ENCODE measurements at regions of chr12 and their contacts with region 1.

Region 1: GRCh38 chr12:45215419-45216229 is at the start of gene ANO6:
- DNase-seq: peak; percentile 91 to 94 (median 92)
- ATAC-seq: peak; percentile 90 to 97 (median 96)
- H3K4me3 ChIP-seq: peak within 1 kb of the TSS; percentile 61 to 97 (median 90)
- H3K27ac ChIP-seq: peak within 1 kb of the TSS; percentile 83 to 99 (median 94)
- H3K4me1 ChIP-seq: peaks cover 4 to 39% (median 28%) of the 10 kb centered on the region in 12 donors
- H3K27me3 ChIP-seq: no peaks in the 10 kb centered on the region
- CTCF ChIP-seq: peak in 4 of 12 donors; percentile 19 to 35 (median 29)
- POLR2A ChIP-seq: peak in 1 of 2 donors; percentile 76
- total RNA-seq, gene ANO6: 29.1 to 57.2 (median 46.7) TPM

Region 2: DNA sequence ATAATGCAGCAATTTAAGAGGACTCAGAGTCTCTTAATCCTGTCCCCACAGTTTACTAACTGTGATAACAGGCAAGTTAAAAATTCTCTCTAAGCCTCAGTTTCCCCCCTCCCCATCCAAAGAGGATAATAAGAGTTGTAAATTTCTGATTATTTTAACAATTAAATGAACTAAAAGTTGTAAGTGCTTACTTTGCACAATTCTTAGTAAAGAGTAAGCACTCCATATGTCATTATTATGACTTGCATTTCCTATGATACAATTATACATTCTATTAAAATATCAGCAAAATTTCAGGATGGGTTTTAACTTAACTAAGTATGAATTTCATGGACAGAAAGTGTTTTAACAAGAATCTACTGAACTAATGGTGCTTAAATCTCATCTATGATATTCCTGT is 419.7 kb before region 1 on chr12:
- intact Hi-C with region 1: no loop called
- DNase-seq: no peak
- ATAC-seq: no peak
- H3K4me3 ChIP-seq: no peak overlapping the region
- H3K27ac ChIP-seq: no peak overlapping the region
- H3K4me1 ChIP-seq: no peaks in the 10 kb centered on the region
- H3K27me3 ChIP-seq: no peaks in the 10 kb centered on the region
- CTCF ChIP-seq: no peak
- POLR2A ChIP-seq: no peak

Region 3: DNA sequence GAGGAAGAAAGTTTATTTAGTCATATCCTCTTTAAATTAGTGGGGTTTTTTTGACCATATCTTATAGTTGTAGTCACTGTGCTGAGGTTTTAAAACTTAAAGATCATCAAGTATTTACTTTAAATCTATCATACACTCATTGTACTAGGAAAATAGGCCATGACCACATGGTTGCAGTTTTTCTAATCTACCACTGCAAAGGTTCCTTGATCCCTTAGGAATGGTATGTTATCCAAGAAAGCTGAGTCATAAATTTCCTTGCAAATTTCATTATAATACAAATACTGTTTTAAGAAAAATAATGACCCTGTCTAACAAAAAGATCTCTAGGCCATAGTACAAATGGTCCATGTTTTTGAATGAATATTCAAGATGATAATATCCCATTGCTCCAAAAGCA is 239.4 kb before region 1 on chr12:
- intact Hi-C with region 1: no loop called
- DNase-seq: no peak
- ATAC-seq: no peak
- H3K4me3 ChIP-seq: no peak overlapping the region
- H3K27ac ChIP-seq: no peak overlapping the region
- H3K4me1 ChIP-seq: no peaks in the 10 kb centered on the region
- H3K27me3 ChIP-seq: no peaks in the 10 kb centered on the region
- CTCF ChIP-seq: no peak
- POLR2A ChIP-seq: no peak

Region 4: DNA sequence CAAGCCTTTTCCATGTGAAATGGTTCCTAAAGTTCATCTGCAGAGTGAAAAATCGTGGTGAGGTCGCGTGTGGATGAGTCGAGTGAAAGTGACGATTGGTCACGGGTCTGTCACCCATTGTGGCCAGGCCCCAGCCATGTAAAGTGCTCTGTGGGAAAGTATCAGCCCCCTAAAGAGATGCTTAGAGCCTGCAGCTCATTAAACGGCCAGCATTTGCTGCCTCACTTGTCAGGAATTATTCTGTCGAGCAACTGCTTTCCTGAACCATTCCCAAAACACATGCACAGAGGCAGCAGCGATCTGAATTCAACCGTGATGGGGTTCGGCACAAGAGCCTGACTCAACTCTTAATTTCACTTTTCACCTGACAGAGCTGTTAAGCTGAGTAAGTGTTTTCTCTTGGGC is 180.8 kb before region 1 on chr12:
- intact Hi-C with region 1: no loop called
- DNase-seq: no peak
- ATAC-seq: no peak
- H3K4me3 ChIP-seq: no peak overlapping the region
- H3K27ac ChIP-seq: no peak overlapping the region
- H3K4me1 ChIP-seq: no peaks in the 10 kb centered on the region
- H3K27me3 ChIP-seq: no peaks in the 10 kb centered on the region
- CTCF ChIP-seq: no peak
- POLR2A ChIP-seq: no peak

Region 5: DNA sequence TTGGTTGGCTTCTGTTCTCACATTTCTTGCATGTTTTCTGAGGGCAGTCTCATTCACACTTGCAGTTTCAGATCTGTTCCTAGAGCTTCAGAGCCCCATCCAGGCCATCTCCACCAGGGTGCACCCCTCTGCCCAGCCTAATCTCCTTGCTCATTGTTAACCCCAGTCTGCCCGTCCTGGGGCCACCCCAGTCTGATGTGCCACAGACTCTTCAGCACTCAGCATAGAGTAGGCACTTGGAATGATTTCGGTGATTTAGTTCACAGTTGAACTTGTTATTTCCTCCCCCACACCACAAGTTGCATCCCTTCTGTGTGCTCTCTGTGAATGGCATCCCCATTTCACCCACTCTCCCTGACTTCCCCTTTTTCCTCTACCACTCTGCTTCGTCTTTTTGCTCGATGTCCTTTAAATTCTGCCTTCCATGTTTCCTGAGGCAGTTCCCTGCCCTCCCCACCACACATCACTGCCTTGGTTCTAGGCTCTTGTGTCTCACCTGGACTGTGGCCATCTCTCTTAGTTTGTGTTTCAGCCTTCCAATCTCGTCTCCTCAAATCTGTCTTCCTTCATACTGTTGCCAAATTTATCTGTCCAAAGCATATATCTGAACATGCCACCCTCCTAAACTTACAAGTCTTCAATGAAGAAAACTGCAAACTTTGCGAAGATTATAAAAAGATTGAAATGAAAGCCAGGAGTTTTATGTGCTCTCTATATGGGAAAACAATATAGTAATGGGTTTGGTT is 41.7 kb after region 1 on chr12:
- intact Hi-C with region 1: loop called in 2 of 10 experiments (anchors 5 to 10 kb)
- DNase-seq: no peak
- ATAC-seq: peak in 2 of 4 donors; percentile 30 to 52
- H3K4me3 ChIP-seq: no peak overlapping the region
- H3K27ac ChIP-seq: no peak overlapping the region
- H3K4me1 ChIP-seq: peaks cover 3 to 56% (median 27%) of the 10 kb centered on the region in 12 donors
- H3K27me3 ChIP-seq: no peaks in the 10 kb centered on the region
- CTCF ChIP-seq: no peak
- POLR2A ChIP-seq: no peak

Region 6: DNA sequence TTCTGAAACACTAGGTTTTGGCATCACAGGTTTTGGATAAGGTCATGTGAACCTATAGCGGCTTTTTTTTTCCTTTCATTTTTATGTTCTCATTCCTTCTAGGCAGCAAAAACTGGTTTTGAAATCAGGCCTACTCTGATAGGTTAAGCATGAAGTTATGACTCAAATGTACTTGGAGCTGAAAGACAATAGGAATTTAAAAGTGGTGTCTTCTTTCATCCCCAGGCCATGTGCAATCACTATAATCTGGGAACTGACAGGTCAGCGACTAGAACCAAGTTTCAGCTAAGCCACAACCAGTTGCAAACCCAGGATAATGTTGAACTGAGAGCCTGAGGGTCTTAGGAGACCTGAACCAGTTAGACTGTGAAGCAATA is 74.6 kb after region 1 on chr12:
- intact Hi-C with region 1: no loop called
- DNase-seq: no peak
- ATAC-seq: no peak
- H3K4me3 ChIP-seq: no peak overlapping the region
- H3K27ac ChIP-seq: no peak overlapping the region
- H3K4me1 ChIP-seq: peaks cover 0 to 27% (median 4%) of the 10 kb centered on the region in 12 donors
- H3K27me3 ChIP-seq: no peaks in the 10 kb centered on the region
- CTCF ChIP-seq: no peak
- POLR2A ChIP-seq: no peak

Region 7: GRCh38 chr12:45354399-45354798 is 138.8 kb after region 1 on chr12:
- intact Hi-C with region 1: loop called in 2 of 10 experiments (anchors 10 kb)
- DNase-seq: no peak
- ATAC-seq: no peak
- H3K4me3 ChIP-seq: no peak overlapping the region
- H3K27ac ChIP-seq: no peak overlapping the region
- H3K4me1 ChIP-seq: peaks cover 0 to 29% (median 21%) of the 10 kb centered on the region in 12 donors
- H3K27me3 ChIP-seq: no peaks in the 10 kb centered on the region
- CTCF ChIP-seq: no peak
- POLR2A ChIP-seq: no peak

Region 8: GRCh38 chr12:45388545-45388944 is 172.9 kb after region 1 on chr12:
- intact Hi-C with region 1: loop called in 4 of 10 experiments (anchors 2 to 10 kb)
- DNase-seq: peak in 2 of 5 donors; percentile 22 to 28
- ATAC-seq: peak in 3 of 4 donors; percentile 48 to 71 (median 60)
- H3K4me3 ChIP-seq: no peak overlapping the region
- H3K27ac ChIP-seq: peak overlapping the region in 1 of 12 donors; percentile 40
- H3K4me1 ChIP-seq: peaks cover 0 to 5% (median 0%) of the 10 kb centered on the region in 12 donors
- H3K27me3 ChIP-seq: no peaks in the 10 kb centered on the region
- CTCF ChIP-seq: peak; percentile 37 to 76 (median 60)
- POLR2A ChIP-seq: no peak

Region 9: DNA sequence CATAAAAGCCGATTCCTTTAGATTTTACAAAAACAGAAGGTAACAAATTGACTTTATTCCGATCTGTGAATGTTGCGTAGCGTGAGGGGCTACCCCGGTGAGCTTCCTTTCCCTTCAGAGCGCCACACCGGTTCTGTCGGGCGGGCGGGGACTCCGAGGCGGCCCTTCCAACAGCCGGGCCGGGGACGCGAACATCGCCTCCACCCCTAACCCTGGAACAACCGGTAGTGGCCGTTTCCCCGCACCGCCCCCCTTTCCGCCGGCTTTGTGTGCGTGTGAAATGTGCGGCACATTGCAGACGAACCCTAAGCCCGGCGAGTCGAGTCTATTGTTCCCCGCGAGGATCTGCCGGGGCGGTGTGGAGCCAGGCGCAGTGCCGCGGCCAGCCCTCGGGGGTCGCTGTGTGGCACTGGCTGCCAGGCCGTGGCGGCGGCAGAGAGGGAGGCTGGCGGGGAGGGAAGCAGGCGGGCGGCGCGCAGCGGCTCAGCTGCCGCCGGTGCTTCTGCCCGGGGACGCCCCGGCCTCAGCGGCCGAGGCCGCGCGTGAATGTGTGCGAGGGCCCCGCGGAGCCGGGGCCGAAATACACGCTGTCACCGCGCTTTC is 513.1 kb after region 1 on chr12:
- intact Hi-C with region 1: loop called in 3 of 10 experiments (anchors 5 to 10 kb)
- DNase-seq: peak; percentile 97 to 99 (median 97)
- ATAC-seq: peak; percentile 79 to 88 (median 81)
- H3K4me3 ChIP-seq: peak overlapping the region; percentile 64 to 94 (median 83)
- H3K27ac ChIP-seq: peak overlapping the region; percentile 94 to 100 (median 98)
- H3K4me1 ChIP-seq: peaks cover 9 to 58% (median 40%) of the 10 kb centered on the region in 12 donors
- H3K27me3 ChIP-seq: no peaks in the 10 kb centered on the region
- CTCF ChIP-seq: peak; percentile 85 to 99 (median 97)
- POLR2A ChIP-seq: peak in 1 of 2 donors; percentile 81

Measured in heart left ventricle (tissue), 16 donors.